ENCODE measurements at regions of chr6 and their contacts with region 1.

Region 1: DNA sequence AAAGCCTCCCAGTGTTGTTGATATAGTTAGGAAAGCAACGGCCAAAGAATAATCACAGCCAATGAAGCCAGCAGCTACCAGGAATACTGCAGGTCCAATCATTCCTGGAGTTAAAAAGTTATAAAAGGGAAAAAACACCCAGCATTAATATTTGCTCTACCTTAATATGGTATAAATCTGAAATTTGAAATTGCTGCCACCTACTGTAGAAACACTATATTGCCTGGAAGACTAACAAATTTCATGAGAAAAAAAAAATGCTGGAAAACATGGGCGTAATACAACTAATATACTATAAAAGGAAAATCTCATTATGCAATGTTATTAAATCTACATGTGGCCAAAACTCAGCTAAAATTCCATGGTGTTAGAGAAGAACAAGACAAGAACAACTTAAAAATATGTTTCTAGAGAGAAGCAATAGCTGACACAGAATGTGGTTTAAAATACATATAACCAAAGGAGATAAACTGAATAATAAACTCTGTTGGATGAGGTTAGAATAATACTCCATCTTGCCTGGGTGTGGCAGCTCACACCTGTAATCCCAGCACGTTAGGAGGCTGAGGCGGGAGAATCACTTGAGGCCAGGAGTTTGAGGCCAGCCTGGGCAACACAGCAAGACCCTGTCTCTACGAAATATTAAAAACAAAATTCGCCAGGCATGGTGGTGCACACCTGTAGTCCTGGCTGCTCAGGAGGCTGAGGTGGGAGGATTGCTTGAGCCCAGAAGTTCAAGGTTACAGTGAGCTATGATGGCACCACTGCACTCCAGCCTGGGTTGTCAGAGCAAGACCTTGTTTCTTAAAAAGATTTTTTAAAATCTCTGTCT is 43.1 kb downstream of the SLC17A5 start:
- DNase-seq: no peak
- H3K4me3 Mint-ChIP-seq: no peak overlapping the region
- H3K27ac Mint-ChIP-seq: peak overlapping the region; percentile 26
- H3K4me1 Mint-ChIP-seq: peaks cover 7% of the 10 kb centered on the region
- H3K27me3 Mint-ChIP-seq: no peaks in the 10 kb centered on the region

Region 2: GRCh38 chr6:73388800-73389512 is 221.7 kb before region 1 on chr6:
- CTCF ChIA-PET with region 1: interaction called, 6 read pairs
- intact Hi-C with region 1: loop called (anchors 1 kb)
- DNase-seq: peak; percentile 64
- H3K4me3 Mint-ChIP-seq: peak overlapping the region; percentile 73
- H3K27ac Mint-ChIP-seq: no peak overlapping the region
- H3K4me1 Mint-ChIP-seq: peaks cover 4% of the 10 kb centered on the region
- H3K27me3 Mint-ChIP-seq: peaks cover 3% of the 10 kb centered on the region

Region 3: GRCh38 chr6:73515204-73515655 is 95.4 kb before region 1 on chr6:
- CTCF ChIA-PET with region 1: interaction called, 44 read pairs
- intact Hi-C with region 1: loop called (anchors 1 kb)
- DNase-seq: no peak
- H3K4me3 Mint-ChIP-seq: peak overlapping the region; percentile 4
- H3K27ac Mint-ChIP-seq: peak overlapping the region; percentile 83
- H3K4me1 Mint-ChIP-seq: peaks cover 24% of the 10 kb centered on the region
- H3K27me3 Mint-ChIP-seq: peaks cover 4% of the 10 kb centered on the region

Region 4: GRCh38 chr6:73585566-73586415 is 24.9 kb before region 1 on chr6:
- CTCF ChIA-PET with region 1: interaction called, 9 read pairs
- intact Hi-C with region 1: loop called (anchors 1 kb)
- DNase-seq: peak; percentile 70
- H3K4me3 Mint-ChIP-seq: peak overlapping the region; percentile 78
- H3K27ac Mint-ChIP-seq: peak overlapping the region; percentile 99
- H3K4me1 Mint-ChIP-seq: peaks cover 36% of the 10 kb centered on the region
- H3K27me3 Mint-ChIP-seq: no peaks in the 10 kb centered on the region

Region 5: GRCh38 chr6:73680289-73680688 is 69.6 kb after region 1 on chr6:
- CTCF ChIA-PET with region 1: no interaction called
- intact Hi-C with region 1: no loop called
- DNase-seq: no peak
- H3K4me3 Mint-ChIP-seq: no peak overlapping the region
- H3K27ac Mint-ChIP-seq: no peak overlapping the region
- H3K4me1 Mint-ChIP-seq: no peaks in the 10 kb centered on the region
- H3K27me3 Mint-ChIP-seq: peaks cover 5% of the 10 kb centered on the region

Measured in activated naive CD4-positive, alpha-beta T cell treated with anti-CD3 and anti-CD28 coated beads for 36 hours (primary cell).